ENCODE measurements at regions of chr10 and their contacts with region 1.

Region 1: GRCh38 chr10:110629680-110630191 is 14.4 kb upstream of the RBM20 start:
- DNase-seq: peak; percentile 98
- ATAC-seq: peak; percentile 97
- H3K4me3 ChIP-seq: no peak overlapping the region
- H3K27ac ChIP-seq: peak overlapping the region; percentile 80
- H3K4me1 ChIP-seq: peaks cover 22% of the 10 kb centered on the region
- H3K27me3 ChIP-seq: no peaks in the 10 kb centered on the region
- CTCF ChIP-seq: no peak

Region 2: GRCh38 chr10:110425684-110426293 is 203.9 kb before region 1 on chr10:
- CTCF ChIA-PET with region 1: no interaction called
- POLR2A ChIA-PET with region 1: no interaction called
- intact Hi-C with region 1: no loop called
- DNase-seq: peak; percentile 61
- ATAC-seq: peak; percentile 42
- H3K4me3 ChIP-seq: no peak overlapping the region
- H3K27ac ChIP-seq: peak overlapping the region; percentile 42
- H3K4me1 ChIP-seq: peaks cover 20% of the 10 kb centered on the region
- H3K27me3 ChIP-seq: no peaks in the 10 kb centered on the region
- CTCF ChIP-seq: no peak

Region 3: DNA sequence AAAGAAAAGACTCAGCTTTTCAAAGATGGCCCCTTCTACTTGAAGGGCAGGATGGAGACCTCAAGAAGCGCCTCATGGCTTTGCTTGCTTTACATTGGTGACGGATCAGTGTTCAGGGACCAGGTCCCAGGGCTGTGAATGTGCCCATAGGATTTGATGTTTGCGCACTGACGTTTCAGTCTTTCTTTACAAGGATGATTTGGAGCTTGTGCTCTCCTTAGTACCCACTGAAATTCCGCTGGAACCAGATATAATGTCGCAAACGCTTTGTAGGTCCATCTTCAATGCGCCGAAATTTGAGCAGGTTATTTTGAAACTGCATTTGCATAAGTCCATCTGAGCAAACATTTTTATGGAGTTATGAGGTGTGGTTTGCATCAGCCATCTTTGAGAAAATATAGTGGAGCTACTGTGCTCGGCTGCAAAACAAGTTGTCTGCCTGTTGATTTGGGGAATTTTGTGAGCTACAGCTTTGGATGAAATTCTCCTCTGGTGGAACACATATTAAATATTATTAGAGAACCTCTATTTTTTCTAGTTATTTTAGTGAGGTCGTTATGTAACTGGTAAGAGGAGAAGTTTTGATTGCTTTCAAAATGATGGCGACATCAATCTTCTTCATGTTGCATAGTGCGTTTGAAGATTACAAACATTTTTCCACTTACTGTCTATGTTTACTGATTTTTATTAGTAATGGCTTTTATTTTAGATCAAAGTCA is 16.8 kb after region 1 on chr10:
- CTCF ChIA-PET with region 1: no interaction called
- POLR2A ChIA-PET with region 1: interaction called, 4 read pairs
- intact Hi-C with region 1: loop called (anchors 1 kb)
- DNase-seq: peak; percentile 13
- ATAC-seq: peak; percentile 11
- H3K4me3 ChIP-seq: peak overlapping the region; percentile 47
- H3K27ac ChIP-seq: 0 out of 2 replicates have a peak overlapping the region, but pooled peaks have one; percentile 14
- H3K4me1 ChIP-seq: peaks cover 23% of the 10 kb centered on the region
- H3K27me3 ChIP-seq: no peaks in the 10 kb centered on the region
- CTCF ChIP-seq: no peak